AG04449 (cell line): ENCODE measurements at regions of chr1 and their contacts with region 1.

Region 1: GRCh38 chr1:204975570-204976235 is 67.3 kb upstream of the CNTN2 start:
- DNase-seq: no peak
- H3K4me3 ChIP-seq: no peak overlapping the region
- CTCF ChIP-seq: peak; percentile 79

Region 2: GRCh38 chr1:204961765-204962419 is 13.8 kb before region 1 on chr1:
- CTCF ChIA-PET with region 1: interaction called, 76 read pairs
- POLR2A ChIA-PET with region 1: no interaction called
- DNase-seq: no peak
- H3K4me3 ChIP-seq: no peak overlapping the region
- CTCF ChIP-seq: no peak

Region 3: DNA sequence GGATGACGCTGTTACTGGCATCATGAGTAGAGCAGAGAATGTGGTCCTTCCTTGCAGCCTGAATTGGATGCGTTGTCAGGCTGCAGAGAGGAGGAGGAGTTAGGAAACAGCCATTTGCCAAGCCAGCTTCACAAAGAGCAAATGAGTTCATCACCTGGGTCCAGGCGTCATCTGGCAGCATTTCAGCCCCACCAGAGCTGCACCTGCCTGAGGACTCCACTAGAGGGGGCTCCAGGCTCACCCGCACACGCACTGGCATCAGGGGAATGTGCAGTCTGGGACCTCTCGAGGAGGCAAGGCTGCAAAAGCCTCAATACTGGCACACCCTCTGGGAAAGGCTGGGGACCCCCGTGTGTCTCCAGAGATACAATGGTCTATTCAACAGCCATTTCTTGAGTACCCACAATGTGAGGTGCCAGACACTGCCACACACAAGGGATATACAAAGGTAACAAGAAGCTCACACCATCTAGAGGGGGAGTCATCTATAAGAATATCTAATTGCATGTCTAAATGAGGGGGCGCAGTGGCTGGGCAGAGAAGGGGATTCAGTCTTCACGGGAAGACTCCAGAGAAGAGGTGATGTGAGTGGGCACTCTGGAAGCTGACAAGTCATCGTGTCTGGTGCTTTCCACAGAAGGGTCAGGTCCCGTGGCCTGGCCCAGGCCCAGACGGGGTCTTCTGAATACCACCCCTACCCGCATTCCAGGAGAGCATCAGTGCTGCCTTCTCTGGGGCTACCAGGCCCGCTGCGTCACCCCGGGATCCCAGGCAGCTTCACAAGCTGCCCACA is 13.8 kb after region 1 on chr1:
- CTCF ChIA-PET with region 1: interaction called, 63 read pairs
- POLR2A ChIA-PET with region 1: no interaction called
- DNase-seq: peak; percentile 17
- H3K4me3 ChIP-seq: no peak overlapping the region
- CTCF ChIP-seq: peak; percentile 98

Region 4: DNA sequence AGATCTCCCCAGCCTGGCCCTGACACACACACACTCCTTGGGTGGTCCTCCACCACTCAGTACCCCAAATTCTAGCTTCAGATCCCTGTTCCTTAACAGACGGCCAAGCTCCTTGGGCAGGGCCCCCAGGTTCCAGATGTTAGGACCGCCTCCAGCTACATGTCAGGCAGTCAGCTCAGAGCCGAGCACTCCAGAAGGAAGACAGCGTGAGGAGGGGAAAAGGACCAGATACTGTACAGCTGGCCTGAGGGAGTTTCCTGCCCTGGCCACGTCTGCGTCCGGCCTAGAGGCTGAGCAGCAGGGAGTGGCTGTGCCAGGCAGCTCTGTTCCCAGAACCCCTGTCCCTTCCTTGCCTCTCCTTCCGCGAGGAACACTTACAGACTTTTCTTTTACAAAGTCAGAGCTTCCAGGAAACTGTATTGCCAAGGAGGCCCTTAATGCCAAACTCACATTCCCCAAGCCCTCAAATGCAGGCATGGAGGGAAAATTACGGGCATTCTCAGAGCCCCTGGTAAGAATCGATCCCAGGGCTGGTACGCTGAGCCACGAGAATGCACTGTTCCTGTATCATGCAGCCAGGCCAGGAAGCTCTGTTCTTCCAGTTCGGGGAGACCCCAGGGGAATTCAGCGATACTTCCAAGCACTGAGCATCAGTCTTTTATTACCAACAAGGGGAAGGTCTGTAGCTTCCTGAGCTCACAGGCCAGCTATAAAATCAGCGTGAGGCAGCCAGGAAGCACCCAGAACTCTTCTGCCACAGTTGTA is 22.1 kb after region 1 on chr1:
- CTCF ChIA-PET with region 1: interaction called, 12 read pairs
- POLR2A ChIA-PET with region 1: no interaction called
- DNase-seq: no peak
- H3K4me3 ChIP-seq: no peak overlapping the region
- CTCF ChIP-seq: no peak

Region 5: GRCh38 chr1:205056188-205056611 is 80.5 kb after region 1 on chr1:
- CTCF ChIA-PET with region 1: interaction called, 153 read pairs
- POLR2A ChIA-PET with region 1: no interaction called
- DNase-seq: no peak
- H3K4me3 ChIP-seq: no peak overlapping the region
- CTCF ChIP-seq: no peak

Region 6: DNA sequence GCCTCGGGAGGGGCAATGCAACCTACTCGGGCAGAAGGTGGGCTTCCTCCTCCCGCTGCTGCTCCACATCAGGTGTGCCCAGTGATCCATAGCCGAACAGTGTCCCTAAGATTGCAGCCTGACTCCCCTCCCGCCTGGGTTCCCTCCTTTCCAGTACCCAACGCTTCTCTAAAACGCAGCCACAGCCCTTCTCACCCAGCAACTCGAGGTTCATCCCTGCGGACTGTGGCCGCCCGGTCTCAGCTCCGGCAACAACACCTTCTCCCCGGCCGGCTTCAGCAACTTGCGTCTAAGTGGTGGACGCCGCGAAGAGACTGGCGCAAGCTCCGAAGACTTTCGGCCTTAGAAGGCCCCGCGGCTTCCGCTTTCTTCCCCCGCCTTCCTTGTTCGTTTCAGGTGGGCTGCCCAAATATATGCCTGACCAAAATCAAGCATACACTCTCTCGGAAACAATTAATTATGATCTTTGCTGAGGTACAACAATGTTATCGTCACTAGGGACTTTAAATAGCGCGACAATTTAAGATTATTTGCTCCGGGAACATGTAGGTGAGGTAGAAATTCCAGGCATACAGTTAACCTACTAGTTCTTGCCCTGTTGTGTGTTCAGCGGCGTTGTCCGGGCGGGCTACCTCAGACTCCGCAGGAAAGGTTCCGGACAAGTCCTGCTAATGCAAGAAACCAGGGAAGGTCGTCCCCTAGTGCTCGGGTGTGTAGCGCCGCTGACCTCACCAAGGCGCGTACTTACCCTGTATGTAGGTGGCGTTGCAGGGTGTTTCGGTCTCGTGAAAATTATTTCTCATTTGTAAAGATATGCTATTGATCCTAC is 146.2 kb after region 1 on chr1 and contains the start of gene RBBP5:
- CTCF ChIA-PET with region 1: interaction called, 10 read pairs
- POLR2A ChIA-PET with region 1: no interaction called
- DNase-seq: peak; percentile 94
- H3K4me3 ChIP-seq: peak within 1 kb of the TSS; percentile 99
- CTCF ChIP-seq: peak; percentile 88